ENCODE measurements at regions of chr14 and their contacts with region 1.

Region 1: GRCh38 chr14:99271951-99272631 is at the start of gene BCL11B:
- DNase-seq: peak; percentile 82
- ATAC-seq: peak; percentile 70
- H3K4me3 ChIP-seq: peak within 1 kb of the TSS; percentile 51 to 64
- H3K27ac ChIP-seq: no peak within 1 kb of the TSS; the same call in 1 of the 2 replicates
- H3K4me1 ChIP-seq: peaks cover 11 to 36% of the 10 kb centered on the region in 2 experiments; a peak in 3 of 4 replicates
- H3K27me3 ChIP-seq: peaks cover 22% of the 10 kb centered on the region
- CTCF ChIP-seq: peak; percentile 25 to 61 (median 54); a peak in 5 of 6 replicates
- POLR2A ChIP-seq: peak; percentile 52
- RAD21 ChIP-seq: peak; percentile 71
- total RNA-seq, gene BCL11B: 1.1 TPM

Region 2: GRCh38 chr14:99035712-99036610 is 236.1 kb before region 1 on chr14:
- CTCF ChIA-PET with region 1: no interaction called
- POLR2A ChIA-PET with region 1: no interaction called
- RAD21 ChIA-PET with region 1: no interaction called
- intact Hi-C with region 1: loop called (anchors 5 kb)
- DNase-seq: peak; percentile 19
- ATAC-seq: peak; percentile 86
- H3K4me3 ChIP-seq: peak overlapping the region in 1 of 2 experiments; percentile 30; a peak in 2 of 4 replicates
- H3K27ac ChIP-seq: peak overlapping the region; percentile 24; the same call in 1 of the 2 replicates
- H3K4me1 ChIP-seq: peaks cover 10 to 13% of the 10 kb centered on the region in 2 experiments
- H3K27me3 ChIP-seq: no peaks in the 10 kb centered on the region
- CTCF ChIP-seq: no peak
- POLR2A ChIP-seq: no peak
- RAD21 ChIP-seq: no peak

Region 3: DNA sequence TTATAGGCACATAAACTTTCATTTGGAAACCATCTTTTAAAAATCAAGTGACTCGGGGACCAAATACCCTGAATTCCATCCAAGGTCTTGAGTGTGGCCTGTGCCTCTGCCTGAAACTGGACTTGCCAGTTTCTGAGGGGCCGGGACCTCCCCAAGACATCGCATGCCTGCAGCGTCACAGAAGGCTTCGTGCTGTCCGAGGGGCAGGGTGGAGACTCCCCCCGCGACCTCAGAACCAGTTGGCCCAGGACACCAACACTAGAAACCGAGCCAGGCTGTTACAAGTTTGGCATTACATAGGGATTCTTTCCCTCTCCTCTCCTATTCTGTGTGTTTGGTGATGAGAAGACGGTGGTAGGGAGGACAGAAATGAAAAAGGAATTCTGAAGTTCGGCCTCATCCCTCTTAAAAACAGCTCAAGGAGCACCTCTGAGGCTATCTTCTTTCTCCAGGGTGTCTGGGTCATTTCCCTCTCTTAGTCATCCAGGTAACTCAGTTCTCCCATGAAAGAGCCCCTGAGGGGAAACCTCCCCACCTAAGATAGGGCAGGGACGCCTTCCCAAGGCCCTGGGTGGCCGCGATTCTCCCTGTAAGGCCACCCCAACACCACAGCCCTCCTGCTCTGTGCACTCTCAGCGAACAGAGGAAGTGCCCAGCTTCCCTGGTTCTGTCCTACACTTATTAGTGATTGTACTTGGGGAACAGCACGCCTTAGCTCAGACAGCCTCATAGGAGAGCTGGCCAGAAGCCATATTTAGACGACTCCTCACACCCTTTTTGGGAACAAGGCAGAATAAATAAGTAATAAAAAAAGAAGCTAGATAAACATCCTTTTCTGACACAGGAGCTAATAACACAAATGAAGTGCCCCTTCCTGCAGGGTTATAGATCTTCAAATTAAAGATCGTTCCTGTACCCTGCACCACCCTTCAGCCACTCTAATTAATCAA is 93.9 kb before region 1 on chr14:
- CTCF ChIA-PET with region 1: no interaction called
- POLR2A ChIA-PET with region 1: no interaction called
- RAD21 ChIA-PET with region 1: no interaction called
- intact Hi-C with region 1: no loop called
- DNase-seq: no peak
- ATAC-seq: no peak
- H3K4me3 ChIP-seq: no peak overlapping the region
- H3K27ac ChIP-seq: no peak overlapping the region
- H3K4me1 ChIP-seq: no peaks in the 10 kb centered on the region
- H3K27me3 ChIP-seq: no peaks in the 10 kb centered on the region
- CTCF ChIP-seq: no peak
- POLR2A ChIP-seq: no peak
- RAD21 ChIP-seq: no peak

Region 4: GRCh38 chr14:99430465-99430864 is 158.4 kb after region 1 on chr14:
- CTCF ChIA-PET with region 1: no interaction called
- POLR2A ChIA-PET with region 1: no interaction called
- RAD21 ChIA-PET with region 1: no interaction called
- intact Hi-C with region 1: no loop called
- DNase-seq: no peak
- ATAC-seq: peak; percentile 92
- H3K4me3 ChIP-seq: no peak overlapping the region
- H3K27ac ChIP-seq: no peak overlapping the region
- H3K4me1 ChIP-seq: no peaks in the 10 kb centered on the region
- H3K27me3 ChIP-seq: no peaks in the 10 kb centered on the region
- CTCF ChIP-seq: peak in 2 of 3 experiments; percentile 52 to 69; a peak in 4 of 6 replicates
- POLR2A ChIP-seq: no peak
- RAD21 ChIP-seq: no peak

Region 5: DNA sequence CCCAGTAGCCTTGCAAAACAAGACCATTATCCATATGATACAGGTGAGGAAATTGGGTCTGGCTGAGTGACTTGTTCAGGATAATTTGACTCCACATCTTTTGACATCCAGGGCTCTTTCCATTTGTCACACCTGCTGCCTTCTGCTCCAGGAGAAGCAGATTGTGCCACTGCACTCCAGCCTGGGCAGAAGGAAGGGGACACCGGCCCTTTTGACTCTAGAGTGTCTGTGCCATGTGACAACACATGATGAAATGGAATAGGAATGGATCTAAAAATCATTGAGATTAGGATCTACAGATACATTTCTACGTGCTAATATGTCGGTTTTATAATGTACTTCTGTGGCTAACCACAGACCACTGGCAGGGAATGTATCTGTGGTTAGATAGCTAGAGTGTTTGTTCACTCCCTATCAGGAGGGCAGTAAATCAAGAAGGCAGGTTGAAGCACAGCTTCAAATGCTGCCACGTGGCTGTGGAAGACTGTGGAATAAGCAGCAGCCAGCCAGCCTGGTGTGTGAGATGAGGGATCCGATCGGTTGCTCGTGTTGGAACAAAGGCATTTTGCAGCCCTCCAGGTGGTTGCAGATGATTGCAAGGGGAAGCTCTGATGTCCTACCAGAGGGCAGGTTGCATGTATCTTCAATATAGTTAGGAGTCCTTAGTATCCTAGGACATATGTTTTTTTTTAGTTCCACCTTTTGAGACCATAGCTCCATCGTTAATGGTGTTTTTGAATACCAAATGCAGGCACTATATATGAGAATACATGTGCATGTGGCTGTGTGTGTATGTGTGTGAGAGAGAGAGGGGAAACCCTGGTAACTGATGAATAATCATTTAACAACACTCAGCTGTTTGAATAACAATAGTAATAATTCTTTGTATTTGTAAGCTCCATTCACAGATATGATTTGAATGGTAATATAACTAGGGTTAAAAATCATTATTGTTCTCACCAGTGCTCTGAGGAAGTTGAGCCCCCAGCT is 549.7 kb after region 1 on chr14:
- CTCF ChIA-PET with region 1: no interaction called
- POLR2A ChIA-PET with region 1: no interaction called
- RAD21 ChIA-PET with region 1: no interaction called
- intact Hi-C with region 1: no loop called
- DNase-seq: no peak
- ATAC-seq: no peak
- H3K4me3 ChIP-seq: no peak overlapping the region
- H3K27ac ChIP-seq: no peak overlapping the region
- H3K4me1 ChIP-seq: no peaks in the 10 kb centered on the region
- H3K27me3 ChIP-seq: no peaks in the 10 kb centered on the region
- CTCF ChIP-seq: no peak
- POLR2A ChIP-seq: no peak
- RAD21 ChIP-seq: no peak